HEK293 (cell line): ENCODE measurements at regions of chr18 and their contacts with region 1.

Region 1: DNA sequence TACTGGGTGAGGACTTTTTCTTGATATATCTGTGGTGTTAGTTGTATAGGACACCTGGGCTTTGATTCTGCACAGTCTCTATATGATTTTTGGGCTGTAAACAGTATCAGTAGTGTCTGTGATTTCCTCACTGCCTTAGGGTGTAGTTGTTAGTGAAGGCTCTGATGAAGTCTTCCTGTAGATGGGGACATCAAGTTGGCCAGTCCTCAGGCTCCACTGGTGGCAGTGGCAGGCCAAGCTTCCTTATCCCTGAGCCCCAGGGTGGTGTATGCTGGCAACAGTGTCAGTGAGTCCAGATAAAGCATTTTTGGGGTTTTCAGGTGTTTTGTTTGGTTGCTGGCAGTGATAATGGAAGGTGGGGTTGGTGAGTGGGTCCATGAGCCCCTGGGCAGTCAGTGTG is 961.4 kb downstream of the DSC3 start:
- H3K4me3 ChIP-seq: no peak overlapping the region
- H3K27ac ChIP-seq: no peak overlapping the region
- H3K4me1 ChIP-seq: no peaks in the 10 kb centered on the region
- CTCF ChIP-seq: no peak

Region 2: DNA sequence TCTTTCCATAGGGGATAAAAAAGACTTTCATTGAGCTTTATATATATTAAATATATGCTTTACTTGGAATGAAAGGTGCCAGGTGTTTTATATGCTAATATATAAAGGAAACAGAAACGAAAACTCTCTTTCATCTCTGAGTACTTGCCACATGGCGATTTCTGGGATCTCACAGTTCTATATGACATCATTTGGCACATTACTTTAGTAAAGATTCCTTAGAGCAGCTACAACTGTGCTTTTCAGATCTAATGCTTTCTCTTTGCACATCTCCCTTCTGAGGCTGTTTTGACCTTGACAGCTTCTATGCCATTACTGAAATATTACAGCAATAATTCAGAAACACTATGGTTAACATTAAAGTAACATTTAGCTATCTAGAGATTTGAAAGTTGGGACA is 821.3 kb before region 1 on chr18:
- CTCF ChIA-PET with region 1: no interaction called
- POLR2A ChIA-PET with region 1: interaction called, 10 read pairs
- H3K4me3 ChIP-seq: no peak overlapping the region
- H3K27ac ChIP-seq: no peak overlapping the region
- H3K4me1 ChIP-seq: no peaks in the 10 kb centered on the region
- CTCF ChIP-seq: no peak

Region 3: DNA sequence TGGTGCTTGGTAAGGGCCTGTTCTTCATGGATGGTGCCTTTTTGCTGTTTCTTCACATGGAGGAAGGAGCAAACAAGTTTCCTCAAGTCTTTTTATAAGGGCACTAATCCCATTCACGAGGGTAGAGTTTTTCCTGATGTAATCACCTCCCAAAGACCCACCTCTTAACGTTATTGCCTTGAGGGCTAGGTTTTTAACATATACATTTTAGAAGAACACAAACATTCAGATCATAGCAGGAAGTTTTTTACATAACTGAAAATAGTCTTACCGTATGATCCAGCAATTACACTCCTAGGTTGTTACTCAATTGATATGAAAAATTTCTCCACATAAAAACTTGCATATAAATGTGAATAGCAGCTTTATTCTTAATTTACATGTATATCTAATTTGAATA is 14.8 kb before region 1 on chr18:
- CTCF ChIA-PET with region 1: no interaction called
- POLR2A ChIA-PET with region 1: no interaction called
- H3K4me3 ChIP-seq: no peak overlapping the region
- H3K27ac ChIP-seq: no peak overlapping the region
- H3K4me1 ChIP-seq: no peaks in the 10 kb centered on the region
- CTCF ChIP-seq: no peak